ENCODE measurements at regions of chr18 and their contacts with region 1.

Region 1: DNA sequence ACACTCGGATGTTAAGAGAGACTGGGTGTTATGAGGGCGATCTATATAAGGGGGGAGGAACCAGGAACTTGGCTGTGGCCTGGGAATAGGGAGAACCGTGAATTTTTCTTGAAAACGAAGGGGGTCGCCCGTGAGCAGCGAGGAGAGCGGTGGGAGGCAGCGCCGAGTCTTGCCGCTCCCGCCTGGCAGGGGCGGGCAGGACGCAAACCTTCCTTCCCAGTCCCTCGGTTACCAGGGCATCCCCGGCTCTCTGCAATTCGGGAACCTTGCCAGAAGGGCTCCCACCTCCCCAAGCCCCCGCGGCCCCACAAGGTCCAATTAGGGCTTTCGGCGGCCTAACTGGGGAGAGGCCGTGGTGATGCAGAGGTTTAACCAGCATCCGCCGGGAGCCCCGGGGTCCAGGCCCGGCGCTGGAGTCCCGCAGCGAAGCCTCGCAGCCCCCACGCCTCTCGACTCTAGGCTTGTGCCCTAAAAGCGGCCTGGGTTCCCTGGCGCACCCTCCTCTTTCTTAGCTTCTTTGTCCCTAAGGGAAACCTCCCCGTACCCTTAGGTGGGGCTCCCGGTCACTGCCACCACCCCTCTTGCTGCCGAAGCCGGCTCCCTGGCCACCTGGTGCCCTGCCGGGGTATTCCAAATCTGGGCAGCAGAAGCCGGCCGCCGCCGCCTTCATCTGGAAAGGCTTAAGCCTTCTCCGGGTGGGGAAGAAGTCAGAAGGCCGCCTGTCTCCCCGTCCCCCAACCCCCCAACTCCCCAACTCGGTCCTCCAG is 680 bp upstream of the FHOD3 start:
- DNase-seq: no peak
- H3K4me3 Mint-ChIP-seq: no peak overlapping the region
- H3K27ac Mint-ChIP-seq: no peak overlapping the region
- H3K4me1 Mint-ChIP-seq: no peaks in the 10 kb centered on the region
- H3K27me3 Mint-ChIP-seq: peaks cover 26% of the 10 kb centered on the region

Region 2: GRCh38 chr18:36275561-36275960 is 21.3 kb before region 1 on chr18:
- intact Hi-C with region 1: loop called (anchors 1 kb)
- DNase-seq: no peak
- H3K4me3 Mint-ChIP-seq: no peak overlapping the region
- H3K27ac Mint-ChIP-seq: no peak overlapping the region
- H3K4me1 Mint-ChIP-seq: no peaks in the 10 kb centered on the region
- H3K27me3 Mint-ChIP-seq: peaks cover 15% of the 10 kb centered on the region

Measured in activated T-helper 1 cell treated with anti-CD3 and anti-CD28 coated beads, Interleukin-12 subunit alpha, Interleukin-12 subunit beta, Interleukin-2, Interleukin-4 antibody, amounts not matched to agents 30 ng/mL and 10 ng/mL and 1 ng/mL, durations not matched to agents 14 hours and 24 hours and 36 hours (primary cell).